ENCODE measurements at regions of chr3 and their contacts with region 1.

Region 1: GRCh38 chr3:125916376-125916978 is 52.5 kb upstream of the ROPN1B start:
- DNase-seq: peak; percentile 92
- H3K4me3 ChIP-seq: peak overlapping the region; percentile 4 to 85 (median 62)
- H3K27ac ChIP-seq: peak overlapping the region; percentile 54
- H3K4me1 ChIP-seq: no peaks in the 10 kb centered on the region
- H3K27me3 ChIP-seq: no peaks in the 10 kb centered on the region
- CTCF ChIP-seq: no peak
- POLR2A ChIP-seq: peak; percentile 36

Region 2: GRCh38 chr3:125528920-125529319 is 387.6 kb before region 1 on chr3:
- CTCF ChIA-PET with region 1: no interaction called
- POLR2A ChIA-PET with region 1: no interaction called
- dilution Hi-C with region 1: no loop called
- intact Hi-C with region 1: no loop called
- DNase-seq: no peak
- H3K4me3 ChIP-seq: no peak overlapping the region
- H3K27ac ChIP-seq: no peak overlapping the region
- H3K4me1 ChIP-seq: no peaks in the 10 kb centered on the region
- H3K27me3 ChIP-seq: no peaks in the 10 kb centered on the region
- CTCF ChIP-seq: no peak
- POLR2A ChIP-seq: no peak

Region 3: GRCh38 chr3:125594581-125595011 is 321.9 kb before region 1 on chr3:
- CTCF ChIA-PET with region 1: no interaction called
- POLR2A ChIA-PET with region 1: no interaction called
- dilution Hi-C with region 1: no loop called
- intact Hi-C with region 1: loop called (anchors 5 kb)
- DNase-seq: no peak
- H3K4me3 ChIP-seq: peak overlapping the region; percentile 51 to 89 (median 58)
- H3K27ac ChIP-seq: peak overlapping the region; percentile 32
- H3K4me1 ChIP-seq: peaks cover 22% of the 10 kb centered on the region
- H3K27me3 ChIP-seq: no peaks in the 10 kb centered on the region
- CTCF ChIP-seq: no peak
- POLR2A ChIP-seq: no peak

Region 4: GRCh38 chr3:125767641-125768040 is 148.8 kb before region 1 on chr3:
- CTCF ChIA-PET with region 1: interaction called, 7 read pairs
- POLR2A ChIA-PET with region 1: no interaction called
- dilution Hi-C with region 1: no loop called
- intact Hi-C with region 1: loop called (anchors 5 kb)
- DNase-seq: no peak
- H3K4me3 ChIP-seq: no peak overlapping the region
- H3K27ac ChIP-seq: no peak overlapping the region
- H3K4me1 ChIP-seq: no peaks in the 10 kb centered on the region
- H3K27me3 ChIP-seq: peaks cover 0 to 4% of the 10 kb centered on the region in 2 experiments
- CTCF ChIP-seq: no peak
- POLR2A ChIP-seq: no peak

Region 5: GRCh38 chr3:125990253-125990970 is 73.9 kb after region 1 on chr3:
- CTCF ChIA-PET with region 1: no interaction called
- POLR2A ChIA-PET with region 1: no interaction called
- dilution Hi-C with region 1: no loop called
- intact Hi-C with region 1: loop called (anchors 1 kb)
- DNase-seq: peak; percentile 63
- H3K4me3 ChIP-seq: peak overlapping the region; percentile 14 to 93 (median 67)
- H3K27ac ChIP-seq: no peak overlapping the region
- H3K4me1 ChIP-seq: peaks cover 8% of the 10 kb centered on the region
- H3K27me3 ChIP-seq: peaks cover 9 to 11% of the 10 kb centered on the region in 2 experiments
- CTCF ChIP-seq: no peak
- POLR2A ChIP-seq: peak; percentile 45

Region 6: DNA sequence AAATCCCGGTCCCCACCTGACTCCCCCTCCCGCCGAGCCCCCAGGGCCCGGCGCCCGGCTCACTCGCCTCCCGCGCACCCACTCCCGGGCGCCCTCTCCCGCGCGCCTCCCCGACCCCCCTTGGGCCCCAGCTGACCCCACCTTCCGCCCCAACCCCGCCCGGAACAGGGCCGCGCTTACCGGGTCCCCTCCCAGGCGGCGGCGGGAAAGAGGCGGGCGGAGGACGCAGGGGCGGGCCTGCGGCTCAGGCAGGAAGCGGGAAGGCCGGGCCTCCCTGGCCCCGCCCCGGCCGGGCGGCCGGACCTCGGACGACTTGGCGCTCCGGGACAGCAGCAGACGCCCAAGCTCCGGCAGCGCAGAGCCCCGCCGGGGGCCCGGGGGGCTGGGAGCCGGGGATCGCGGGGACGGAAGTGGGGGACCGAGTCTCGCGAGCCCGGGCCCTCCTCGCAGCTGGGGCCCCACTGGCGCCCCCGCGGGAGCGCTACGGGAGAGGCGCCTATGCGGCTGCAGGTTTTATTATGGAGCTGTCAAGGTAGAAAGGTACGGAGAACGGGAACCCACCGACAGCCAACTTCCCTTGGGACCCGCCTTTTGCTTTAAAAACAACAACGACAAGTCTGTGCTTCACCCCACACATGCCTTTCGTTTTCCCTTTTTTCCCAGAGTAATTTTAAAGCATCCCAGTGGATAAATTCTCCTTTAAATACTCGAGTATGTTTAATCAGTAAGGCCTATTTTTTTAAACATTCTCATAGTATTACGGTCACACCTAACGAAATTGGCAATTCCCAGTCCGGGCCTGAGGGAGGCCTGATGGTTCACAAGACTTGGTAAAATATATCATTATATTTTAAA is 167.7 kb after region 1 on chr3 and contains the start of gene SLC41A3:
- CTCF ChIA-PET with region 1: no interaction called
- POLR2A ChIA-PET with region 1: no interaction called
- dilution Hi-C with region 1: no loop called
- intact Hi-C with region 1: loop called (anchors 5 kb)
- DNase-seq: peak; percentile 74
- H3K4me3 ChIP-seq: peak within 1 kb of the TSS; percentile 65 to 82 (median 71)
- H3K27ac ChIP-seq: peak within 1 kb of the TSS; percentile 41
- H3K4me1 ChIP-seq: peaks cover 5% of the 10 kb centered on the region
- H3K27me3 ChIP-seq: peaks cover 2 to 3% of the 10 kb centered on the region in 2 experiments
- CTCF ChIP-seq: peak; percentile 18 to 58
- POLR2A ChIP-seq: no peak
- total RNA-seq, gene SLC41A3: 47.1 and 52.5 TPM in 2 replicates

Measured in endothelial cell of umbilical vein (primary cell).